ENCODE measurements at regions of chr19 and their contacts with region 1.

Region 1: DNA sequence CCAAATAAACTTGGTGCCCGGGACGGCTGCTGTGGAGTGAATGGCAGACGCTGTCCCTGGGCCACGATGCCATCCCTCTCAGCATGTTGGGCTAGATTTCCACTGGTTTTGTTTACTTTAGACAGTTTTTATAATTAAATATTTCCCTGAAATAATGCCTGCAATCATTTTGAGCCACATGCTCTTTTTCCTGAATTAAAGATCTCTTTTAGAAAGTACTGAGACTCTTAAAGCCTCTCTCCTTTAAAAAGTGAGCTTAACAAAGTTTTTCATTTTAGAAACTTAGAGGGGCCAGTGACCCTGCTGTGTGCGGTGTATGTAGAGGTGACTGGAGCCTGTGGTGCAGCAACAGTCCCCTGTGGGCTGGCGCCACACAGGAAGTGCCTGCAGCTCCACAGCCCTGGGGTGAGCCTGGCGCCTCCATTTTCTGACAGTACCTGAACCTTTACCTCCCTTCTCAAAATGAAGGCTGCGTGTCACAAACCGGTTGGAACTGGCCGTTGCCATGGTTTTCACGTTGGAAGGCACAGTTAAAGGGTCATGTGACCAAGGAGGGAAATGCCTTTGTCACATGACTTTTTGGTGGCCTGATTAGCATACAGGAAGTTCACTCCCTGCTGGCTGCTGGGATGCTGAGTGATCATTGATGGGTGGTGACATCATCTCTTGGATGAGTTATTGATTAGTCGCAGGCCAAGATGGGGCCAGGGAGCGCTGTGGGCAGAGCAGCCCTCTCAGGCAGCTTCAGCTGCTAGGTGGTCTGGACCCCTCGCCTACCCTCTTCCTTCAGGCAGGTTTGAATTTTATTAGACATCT is 26.3 kb downstream of the TSSK6 start:
- DNase-seq: peak; percentile 89 to 92
- ATAC-seq: peak; percentile 78
- H3K4me3 ChIP-seq: no peak overlapping the region
- H3K27ac ChIP-seq: peak overlapping the region; percentile 86 to 93
- H3K4me1 ChIP-seq: no peaks in the 10 kb centered on the region
- H3K27me3 ChIP-seq: no peaks in the 10 kb centered on the region

Region 2: DNA sequence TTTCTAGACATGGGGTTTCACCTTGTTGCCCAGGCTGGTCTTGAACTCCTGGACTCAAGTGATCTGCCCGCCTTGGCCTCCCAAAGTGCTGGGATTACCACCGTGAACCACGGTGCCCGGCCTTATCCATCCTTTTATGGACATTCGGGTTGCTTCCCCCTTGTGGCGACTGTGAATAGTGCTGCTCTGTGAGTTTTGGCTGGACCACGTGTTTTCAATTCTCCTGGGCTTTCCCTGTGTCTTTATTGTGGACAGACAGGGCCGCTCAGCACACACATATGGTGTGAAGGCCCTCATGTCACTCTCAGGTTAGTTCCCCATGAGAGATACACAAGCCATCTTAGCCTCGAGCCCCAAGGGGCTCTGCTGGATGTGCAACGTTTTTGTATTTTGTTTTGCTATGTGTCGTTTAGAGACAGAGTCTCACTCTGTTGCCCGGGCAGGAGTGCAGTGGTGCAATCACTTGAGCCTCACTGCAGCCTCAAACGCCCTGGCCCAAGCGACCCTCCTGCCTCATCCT is 127.9 kb before region 1 on chr19:
- intact Hi-C with region 1: loop called in 1 of 2 experiments (anchors 1 kb)
- DNase-seq: peak; percentile 86 to 91
- ATAC-seq: peak; percentile 85
- H3K4me3 ChIP-seq: no peak overlapping the region
- H3K27ac ChIP-seq: peak overlapping the region in 1 of 2 donors; percentile 41
- H3K4me1 ChIP-seq: no peaks in the 10 kb centered on the region
- H3K27me3 ChIP-seq: no peaks in the 10 kb centered on the region

Region 3: DNA sequence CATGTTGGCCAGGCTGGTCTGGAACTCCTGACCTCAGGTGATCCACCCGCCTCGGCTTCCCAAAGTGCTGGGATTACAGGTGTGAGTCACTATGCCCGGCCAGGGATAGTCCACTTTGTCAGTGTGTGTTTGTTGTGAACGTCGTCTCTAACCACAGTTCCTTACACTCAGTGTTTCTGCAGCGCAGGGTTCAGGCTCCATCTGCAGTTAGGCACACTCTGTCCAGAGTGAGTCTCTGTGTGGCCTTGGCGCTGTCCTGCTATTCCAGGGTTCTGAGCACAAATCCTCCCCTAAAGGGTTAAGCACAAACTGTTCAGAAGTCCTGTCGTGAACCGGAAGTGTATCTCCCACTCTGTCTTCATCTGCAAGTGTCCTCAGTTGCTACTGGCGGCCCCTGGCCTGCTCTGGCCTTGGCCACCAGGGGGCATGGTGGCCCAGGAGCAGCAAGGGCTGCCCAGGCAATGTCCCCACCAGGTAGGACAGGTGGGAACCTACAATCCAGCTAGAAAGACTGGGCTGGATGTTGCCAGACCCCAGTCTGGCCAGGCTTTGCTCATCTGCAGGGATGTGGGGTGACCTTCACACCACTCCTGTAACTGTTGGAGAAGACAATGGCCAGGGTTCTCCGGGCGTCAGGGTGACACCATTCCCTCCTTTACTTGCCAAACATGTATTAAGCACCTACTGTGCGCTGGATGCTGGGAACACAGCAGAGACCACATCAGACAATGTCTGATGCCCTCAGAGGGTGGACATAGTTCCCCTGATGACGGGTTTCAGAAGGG is 122.3 kb before region 1 on chr19:
- intact Hi-C with region 1: loop called (anchors 1 to 2 kb)
- DNase-seq: peak; percentile 75 to 84
- ATAC-seq: peak; percentile 83
- H3K4me3 ChIP-seq: no peak overlapping the region
- H3K27ac ChIP-seq: no peak overlapping the region
- H3K4me1 ChIP-seq: no peaks in the 10 kb centered on the region
- H3K27me3 ChIP-seq: no peaks in the 10 kb centered on the region

Region 4: DNA sequence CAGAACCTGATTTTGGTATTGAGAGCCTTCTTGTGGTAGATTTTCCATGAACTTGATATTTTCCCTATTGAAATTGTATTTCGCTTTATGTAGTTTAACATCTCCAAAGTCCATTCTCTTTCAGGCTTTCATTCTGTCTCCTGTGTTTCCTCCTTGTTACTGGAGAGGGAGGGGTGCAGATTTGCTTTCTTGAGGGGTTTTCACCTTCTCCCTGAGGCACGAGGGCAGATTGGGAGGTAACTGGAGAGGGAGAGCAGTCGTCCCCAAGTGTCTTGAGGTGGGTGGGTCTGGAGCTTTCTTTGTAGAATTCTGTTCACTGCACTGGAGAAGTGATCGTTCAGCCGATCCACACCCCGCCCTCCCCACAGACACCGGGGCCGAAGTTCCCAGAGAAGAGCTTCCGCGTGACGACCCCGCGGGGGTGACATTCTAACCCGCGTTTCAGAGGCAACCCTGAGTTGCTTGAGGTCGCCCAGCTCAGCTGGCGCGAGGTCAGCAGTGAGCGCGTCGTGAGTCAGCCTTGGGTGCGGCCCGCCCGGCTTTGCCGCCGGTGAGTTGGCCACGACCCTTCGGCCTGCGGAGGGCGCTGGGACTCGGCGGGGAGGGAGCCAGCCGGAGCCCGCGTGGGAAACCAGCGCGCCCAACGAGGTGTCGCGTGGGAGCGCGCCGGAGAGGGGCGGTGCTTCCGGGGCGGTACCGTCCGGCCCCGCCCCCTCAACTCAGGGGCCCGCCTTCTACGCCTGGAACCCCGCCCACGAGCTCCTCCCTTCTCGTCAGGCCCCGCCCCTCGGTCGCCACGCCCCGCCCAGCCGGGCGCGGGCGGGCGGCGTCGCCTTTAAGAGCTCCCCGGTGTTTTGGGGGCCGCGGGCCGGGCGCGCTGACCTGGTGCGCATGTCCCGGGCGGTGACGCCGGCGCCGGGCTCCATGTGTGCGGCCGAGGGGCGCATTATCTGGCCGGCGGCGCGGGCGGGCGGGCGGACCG is 83.9 kb before region 1 on chr19 and contains the start of gene GATAD2A:
- intact Hi-C with region 1: loop called in 1 of 2 experiments (anchors 5 kb)
- DNase-seq: peak; percentile 97 to 98
- ATAC-seq: peak; percentile 98
- H3K4me3 ChIP-seq: peak within 1 kb of the TSS; percentile 91 to 99
- H3K27ac ChIP-seq: peak within 1 kb of the TSS; percentile 49 to 96
- H3K4me1 ChIP-seq: peaks cover 1 to 11% of the 10 kb centered on the region in 2 donors
- H3K27me3 ChIP-seq: no peaks in the 10 kb centered on the region
- total RNA-seq, gene GATAD2A: 78.6 to 86.7 TPM

Region 5: GRCh38 chr19:19540715-19541440 is 51.8 kb after region 1 on chr19:
- intact Hi-C with region 1: no loop called
- DNase-seq: peak in 1 of 2 donors; percentile 84
- ATAC-seq: peak; percentile 8
- H3K4me3 ChIP-seq: no peak overlapping the region
- H3K27ac ChIP-seq: no peak overlapping the region
- H3K4me1 ChIP-seq: no peaks in the 10 kb centered on the region
- H3K27me3 ChIP-seq: no peaks in the 10 kb centered on the region

Region 6: DNA sequence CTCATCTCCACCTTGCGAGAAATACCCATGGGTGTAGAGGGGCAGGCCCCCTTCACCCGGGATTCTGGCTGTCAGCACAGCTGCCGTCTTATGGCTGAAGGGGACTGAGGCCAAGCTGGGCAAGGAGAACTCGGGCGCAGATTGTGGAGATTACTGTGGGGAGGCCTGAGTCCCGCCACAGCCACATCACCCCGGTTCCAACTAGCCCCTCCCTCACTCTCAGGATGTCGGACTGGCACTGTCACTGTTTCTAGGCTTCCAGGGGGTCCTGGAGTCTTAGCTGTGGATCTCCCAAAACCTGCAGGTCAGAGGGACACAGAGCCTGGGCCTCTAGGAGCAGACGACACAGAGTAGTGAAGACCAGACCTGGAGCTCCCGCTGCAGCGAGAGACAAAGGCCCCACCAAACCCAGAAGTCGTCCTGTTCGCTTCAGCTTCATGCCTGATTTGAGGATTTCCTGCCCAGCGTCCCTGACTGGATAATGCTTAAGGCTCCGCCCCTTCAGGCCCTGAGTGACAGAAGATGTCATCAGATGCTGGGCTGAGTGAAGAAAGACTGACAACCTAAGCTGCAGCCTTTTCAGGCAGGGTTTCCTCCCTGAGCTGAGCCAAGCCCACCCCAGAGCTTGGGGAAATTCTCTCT is 467.5 kb after region 1 on chr19:
- intact Hi-C with region 1: no loop called
- DNase-seq: no peak
- ATAC-seq: no peak
- H3K4me3 ChIP-seq: no peak overlapping the region
- H3K27ac ChIP-seq: no peak overlapping the region
- H3K4me1 ChIP-seq: no peaks in the 10 kb centered on the region
- H3K27me3 ChIP-seq: no peaks in the 10 kb centered on the region

Region 7: GRCh38 chr19:21143846-21144245 is 1654.8 kb after region 1 on chr19:
- intact Hi-C with region 1: no loop called
- DNase-seq: no peak
- ATAC-seq: no peak
- H3K4me3 ChIP-seq: no peak overlapping the region
- H3K27ac ChIP-seq: no peak overlapping the region
- H3K4me1 ChIP-seq: no peaks in the 10 kb centered on the region
- H3K27me3 ChIP-seq: no peaks in the 10 kb centered on the region

Measured in aorta (tissue), 5 donors.